ENCODE measurements at regions of chr10 and their contacts with region 1.

Region 1: DNA sequence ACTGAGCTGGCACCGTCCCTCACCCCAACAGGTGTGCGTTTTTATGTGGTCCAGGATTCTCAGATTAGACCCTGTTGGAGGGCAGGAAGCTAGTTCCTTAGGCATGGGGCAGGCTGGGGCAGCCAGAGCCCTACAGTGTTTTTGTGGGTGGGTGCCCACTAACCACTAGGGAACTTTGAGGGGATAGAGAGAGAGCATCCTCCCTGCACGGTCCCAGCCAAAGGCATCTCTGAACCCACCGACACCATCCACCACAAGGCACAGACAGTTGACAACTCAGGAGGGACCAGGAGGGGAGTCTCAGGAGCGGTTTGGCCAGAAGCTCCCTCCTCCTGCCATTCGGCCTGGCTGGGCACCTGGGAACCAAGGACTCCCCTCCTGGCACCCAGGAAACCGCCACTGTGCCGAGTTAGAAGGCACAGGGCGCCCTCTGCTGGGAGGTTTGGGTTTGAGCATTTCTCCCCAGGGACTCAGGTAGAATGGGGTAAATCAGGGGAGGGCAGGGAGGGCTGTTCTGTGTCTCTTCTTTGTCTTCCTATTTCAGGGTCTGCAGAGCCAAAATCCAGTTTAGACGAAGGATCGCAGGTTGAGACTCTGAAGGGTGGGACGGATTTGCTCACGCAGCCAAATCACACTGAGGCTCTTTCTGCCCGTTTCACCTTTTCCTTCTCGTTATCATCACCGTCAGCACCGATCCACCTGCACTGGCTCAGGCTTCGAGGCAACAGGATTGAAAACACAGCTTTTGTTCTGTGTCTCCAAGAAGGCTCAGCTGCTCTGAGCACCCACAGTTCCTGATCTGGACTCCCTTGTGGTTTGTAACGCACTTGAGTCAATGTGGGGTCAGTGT is 84.8 kb upstream of the COL13A1 start:
- DNase-seq: peak; percentile 70
- CTCF ChIP-seq: peak; percentile 63

Region 2: GRCh38 chr10:69696073-69696731 is 20.7 kb before region 1 on chr10:
- CTCF ChIA-PET with region 1: interaction called, 15 read pairs
- POLR2A ChIA-PET with region 1: no interaction called
- DNase-seq: no peak
- CTCF ChIP-seq: peak; percentile 33

Region 3: GRCh38 chr10:69728335-69728870 is 11.5 kb after region 1 on chr10:
- CTCF ChIA-PET with region 1: interaction called, 23 read pairs
- POLR2A ChIA-PET with region 1: no interaction called
- DNase-seq: no peak
- CTCF ChIP-seq: no peak

Region 4: GRCh38 chr10:69794673-69795072 is 77.7 kb after region 1 on chr10:
- CTCF ChIA-PET with region 1: no interaction called
- POLR2A ChIA-PET with region 1: no interaction called
- DNase-seq: no peak
- CTCF ChIP-seq: no peak

Measured in GM10248 (cell line).